ENCODE measurements at regions of chr12 and their contacts with region 1.

Region 1: DNA sequence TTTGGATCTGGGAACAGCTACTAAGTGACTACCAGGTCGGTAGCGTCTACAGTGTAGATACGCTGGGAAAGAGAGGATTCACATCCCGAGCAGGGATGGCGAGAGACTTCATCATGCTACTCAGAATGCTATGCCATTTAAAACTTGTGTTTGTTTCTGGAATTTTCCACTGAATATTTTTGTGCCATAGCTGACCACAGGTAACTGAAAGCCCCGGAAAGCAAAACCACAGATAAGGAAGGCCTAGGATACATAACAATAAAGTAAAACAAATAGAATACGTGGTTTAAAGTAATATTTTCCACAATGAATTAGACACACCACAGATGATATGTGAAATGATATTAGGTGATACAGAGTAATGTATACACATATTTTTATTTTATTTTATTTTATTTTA is 7.9 kb upstream of the HCAR1 start:
- DNase-seq: peak; percentile 51

Region 2: GRCh38 chr12:122651520-122652224 is 86.9 kb before region 1 on chr12:
- intact Hi-C with region 1: loop called in 1 of 2 experiments (anchors 5 kb)
- DNase-seq: no peak

Measured in posterior vena cava (tissue), 2 donors.